ENCODE measurements at regions of chr3 and their contacts with region 1.

Region 1: DNA sequence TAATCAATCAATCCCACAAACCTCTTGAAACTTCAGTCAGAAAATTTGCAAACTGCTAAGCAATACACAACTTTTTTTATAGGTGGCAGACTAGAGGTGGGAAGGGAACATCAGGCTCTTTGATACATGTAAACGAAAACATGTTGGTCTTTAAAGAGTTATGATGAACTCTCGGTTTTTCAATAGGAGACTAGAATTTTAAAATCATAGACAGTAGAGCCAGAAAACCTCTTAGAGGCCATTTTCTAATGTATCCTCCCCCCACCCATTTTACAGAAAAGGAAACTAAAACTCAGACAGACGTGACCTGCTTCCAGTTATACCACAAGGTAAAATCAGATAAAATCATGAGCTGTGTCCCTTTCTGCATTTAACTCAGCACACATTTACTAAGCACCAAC is 179.1 kb upstream of the LPP start:
- DNase-seq: no peak
- ATAC-seq: peak; percentile 79
- H3K4me3 Mint-ChIP-seq: peak overlapping the region; percentile 62
- H3K27ac Mint-ChIP-seq: peak overlapping the region; percentile 89
- H3K4me1 Mint-ChIP-seq: peaks cover 59% of the 10 kb centered on the region
- H3K27me3 Mint-ChIP-seq: no peaks in the 10 kb centered on the region

Region 2: GRCh38 chr3:187989575-187990153 is 14.8 kb after region 1 on chr3:
- CTCF ChIA-PET with region 1: interaction called, 12 read pairs
- DNase-seq: no peak
- ATAC-seq: no peak
- H3K4me3 Mint-ChIP-seq: no peak overlapping the region
- H3K27ac Mint-ChIP-seq: no peak overlapping the region
- H3K4me1 Mint-ChIP-seq: peaks cover 45% of the 10 kb centered on the region
- H3K27me3 Mint-ChIP-seq: no peaks in the 10 kb centered on the region

Region 3: GRCh38 chr3:188026191-188026968 is 51.5 kb after region 1 on chr3:
- CTCF ChIA-PET with region 1: no interaction called
- DNase-seq: no peak
- ATAC-seq: no peak
- H3K4me3 Mint-ChIP-seq: no peak overlapping the region
- H3K27ac Mint-ChIP-seq: no peak overlapping the region
- H3K4me1 Mint-ChIP-seq: no peaks in the 10 kb centered on the region
- H3K27me3 Mint-ChIP-seq: no peaks in the 10 kb centered on the region